ENCODE measurements at regions of chr17 and their contacts with region 1.

Region 1: GRCh38 chr17:39927101-39927928 is at the starts of genes LRRC3C and ORMDL3:
- DNase-seq: peak; percentile 86 to 95 (median 92)
- ATAC-seq: peak; percentile 92
- H3K4me3 ChIP-seq: peak within 1 kb of the TSS; percentile 82
- H3K4me3 Mint-ChIP-seq: peak within 1 kb of the TSS; percentile 90 to 98 (median 92)
- H3K27ac ChIP-seq: peak within 1 kb of the TSS; percentile 87
- H3K27ac Mint-ChIP-seq: peak within 1 kb of the TSS; percentile 85 to 97 (median 93)
- H3K4me1 ChIP-seq: peaks cover 49 to 50% of the 10 kb centered on the region in 2 donors
- H3K4me1 Mint-ChIP-seq: peaks cover 20 to 59% (median 46%) of the 10 kb centered on the region in 7 donors
- H3K27me3 ChIP-seq: no peaks in the 10 kb centered on the region
- H3K27me3 Mint-ChIP-seq: no peaks in the 10 kb centered on the region
- total RNA-seq, gene LRRC3C: 0.27 TPM in 1 of 5 experiments, not detected in the others
- total RNA-seq, gene ORMDL3: 77.6 to 205 (median 110) TPM

Region 2: DNA sequence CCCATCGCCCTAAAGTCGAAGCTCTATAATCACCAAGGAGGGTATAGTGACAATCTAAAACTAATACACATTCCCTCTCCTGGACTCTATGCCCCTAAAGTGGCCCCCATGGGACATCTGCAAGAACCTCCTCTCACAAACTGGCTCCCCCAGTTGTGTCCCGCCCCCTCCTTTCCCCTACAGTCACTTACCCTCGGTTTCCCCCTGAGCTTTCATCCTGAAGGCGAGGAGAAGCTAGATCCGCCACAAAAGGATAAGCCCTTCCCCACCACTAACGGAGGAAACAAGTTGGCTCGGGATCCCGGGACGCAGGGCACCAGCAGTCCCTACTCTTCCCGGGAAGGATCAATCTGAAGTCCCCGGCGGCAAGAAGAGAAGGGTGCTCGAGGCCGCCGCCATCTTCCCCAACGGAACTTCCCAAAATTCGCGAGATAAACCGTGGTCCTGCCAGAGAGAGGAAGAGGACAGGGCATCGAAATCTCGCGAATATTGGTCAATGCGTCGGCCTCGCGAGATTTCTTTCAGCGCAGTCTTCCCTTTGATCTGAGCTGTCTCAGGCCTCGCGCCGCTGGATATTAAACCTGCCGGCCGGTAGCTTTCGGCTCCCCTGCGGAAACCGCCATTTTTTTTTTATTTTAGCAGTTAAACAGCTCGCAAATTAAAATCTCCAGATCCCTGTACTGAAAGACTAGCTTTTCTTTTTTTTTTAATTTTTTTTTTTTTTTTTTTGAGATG is 476.3 kb before region 1 on chr17 and contains the start of gene MED1:
- CTCF ChIA-PET with region 1: no interaction called
- POLR2A ChIA-PET with region 1: no interaction called
- intact Hi-C with region 1: no loop called
- DNase-seq: peak; percentile 77 to 94 (median 89)
- ATAC-seq: peak; percentile 95
- H3K4me3 ChIP-seq: peak within 1 kb of the TSS; percentile 98
- H3K4me3 Mint-ChIP-seq: peak within 1 kb of the TSS; percentile 92 to 98 (median 96)
- H3K27ac ChIP-seq: peak within 1 kb of the TSS; percentile 85
- H3K27ac Mint-ChIP-seq: peak within 1 kb of the TSS; percentile 96 to 100 (median 99)
- H3K4me1 ChIP-seq: peaks cover 8 to 12% of the 10 kb centered on the region in 2 donors
- H3K4me1 Mint-ChIP-seq: peaks cover 7 to 38% (median 29%) of the 10 kb centered on the region in 7 donors
- H3K27me3 ChIP-seq: no peaks in the 10 kb centered on the region
- H3K27me3 Mint-ChIP-seq: no peaks in the 10 kb centered on the region
- total RNA-seq, gene MED1: 37.3 to 61.5 (median 56.0) TPM

Region 3: DNA sequence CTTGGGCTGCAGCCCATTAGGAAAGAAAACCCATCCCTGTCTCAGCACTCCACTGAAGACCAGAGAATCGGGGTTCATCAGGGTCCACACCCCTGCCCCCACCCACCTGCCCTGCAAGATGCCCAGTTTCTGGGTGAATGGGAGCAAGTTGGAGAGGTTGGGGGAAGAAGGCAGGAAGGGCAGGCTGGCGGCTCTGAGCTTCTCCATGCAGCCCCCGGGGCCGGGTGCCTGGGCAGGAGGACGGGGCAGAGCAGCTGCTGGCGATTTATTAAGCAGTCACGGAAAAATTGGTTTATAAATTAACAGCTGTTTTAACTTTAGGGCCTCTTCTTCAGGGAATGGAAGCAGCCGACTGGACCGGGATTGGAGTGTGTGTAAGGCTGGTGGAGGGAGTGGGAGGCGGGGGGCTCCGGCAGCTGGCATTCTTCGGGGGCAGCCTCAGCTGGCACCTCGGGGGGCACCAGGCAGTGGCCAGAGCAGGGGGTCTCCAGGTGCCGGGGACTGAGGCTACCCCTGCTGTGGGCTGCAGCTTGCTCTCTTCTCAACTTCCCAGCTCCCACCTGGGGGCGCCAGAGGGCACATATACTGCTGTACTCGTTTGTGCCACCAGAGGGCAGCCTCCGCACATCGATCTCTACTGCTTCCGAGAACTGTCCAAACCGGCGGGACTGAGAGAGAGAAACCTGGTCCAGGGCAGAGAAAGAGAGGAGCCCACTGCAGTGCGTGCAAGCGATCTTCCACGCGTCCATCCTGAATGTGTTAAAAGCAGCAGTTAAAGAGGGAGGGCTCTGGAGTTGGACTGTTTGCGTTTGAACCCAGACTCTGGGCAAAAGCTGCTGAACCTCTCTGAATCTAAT is 305.6 kb before region 1 on chr17:
- CTCF ChIA-PET with region 1: interaction called, 4 read pairs
- POLR2A ChIA-PET with region 1: interaction called, 3 read pairs
- intact Hi-C with region 1: loop called in 1 of 2 experiments (anchors 2 kb)
- DNase-seq: peak; percentile 74 to 95 (median 86)
- ATAC-seq: peak; percentile 94
- H3K4me3 ChIP-seq: peak overlapping the region; percentile 41
- H3K4me3 Mint-ChIP-seq: peak overlapping the region in 8 of 10 donors; percentile 34 to 82 (median 58)
- H3K27ac ChIP-seq: no peak overlapping the region
- H3K27ac Mint-ChIP-seq: peak overlapping the region in 4 of 9 donors; percentile 10 to 74 (median 66)
- H3K4me1 ChIP-seq: peaks cover 12 to 26% of the 10 kb centered on the region in 2 donors
- H3K4me1 Mint-ChIP-seq: peaks cover 15 to 38% (median 24%) of the 10 kb centered on the region in 7 donors
- H3K27me3 ChIP-seq: peaks cover 3 to 7% of the 10 kb centered on the region in 2 donors
- H3K27me3 Mint-ChIP-seq: peaks cover 5 to 69% (median 18%) of the 10 kb centered on the region in 5 donors

Region 4: GRCh38 chr17:39676198-39676819 is 251.0 kb before region 1 on chr17:
- CTCF ChIA-PET with region 1: no interaction called
- POLR2A ChIA-PET with region 1: no interaction called
- intact Hi-C with region 1: no loop called
- DNase-seq: peak in 7 of 9 donors; percentile 49 to 73 (median 58)
- ATAC-seq: peak; percentile 86
- H3K4me3 ChIP-seq: no peak overlapping the region
- H3K4me3 Mint-ChIP-seq: peak overlapping the region in 8 of 10 donors; percentile 6 to 70 (median 50)
- H3K27ac ChIP-seq: peak overlapping the region; percentile 17
- H3K27ac Mint-ChIP-seq: peak overlapping the region; percentile 55 to 97 (median 89)
- H3K4me1 ChIP-seq: peaks cover 45 to 63% of the 10 kb centered on the region in 2 donors
- H3K4me1 Mint-ChIP-seq: peaks cover 43 to 68% (median 59%) of the 10 kb centered on the region in 7 donors
- H3K27me3 ChIP-seq: no peaks in the 10 kb centered on the region
- H3K27me3 Mint-ChIP-seq: peaks cover 0 to 3% (median 0%) of the 10 kb centered on the region in 5 donors

Region 5: DNA sequence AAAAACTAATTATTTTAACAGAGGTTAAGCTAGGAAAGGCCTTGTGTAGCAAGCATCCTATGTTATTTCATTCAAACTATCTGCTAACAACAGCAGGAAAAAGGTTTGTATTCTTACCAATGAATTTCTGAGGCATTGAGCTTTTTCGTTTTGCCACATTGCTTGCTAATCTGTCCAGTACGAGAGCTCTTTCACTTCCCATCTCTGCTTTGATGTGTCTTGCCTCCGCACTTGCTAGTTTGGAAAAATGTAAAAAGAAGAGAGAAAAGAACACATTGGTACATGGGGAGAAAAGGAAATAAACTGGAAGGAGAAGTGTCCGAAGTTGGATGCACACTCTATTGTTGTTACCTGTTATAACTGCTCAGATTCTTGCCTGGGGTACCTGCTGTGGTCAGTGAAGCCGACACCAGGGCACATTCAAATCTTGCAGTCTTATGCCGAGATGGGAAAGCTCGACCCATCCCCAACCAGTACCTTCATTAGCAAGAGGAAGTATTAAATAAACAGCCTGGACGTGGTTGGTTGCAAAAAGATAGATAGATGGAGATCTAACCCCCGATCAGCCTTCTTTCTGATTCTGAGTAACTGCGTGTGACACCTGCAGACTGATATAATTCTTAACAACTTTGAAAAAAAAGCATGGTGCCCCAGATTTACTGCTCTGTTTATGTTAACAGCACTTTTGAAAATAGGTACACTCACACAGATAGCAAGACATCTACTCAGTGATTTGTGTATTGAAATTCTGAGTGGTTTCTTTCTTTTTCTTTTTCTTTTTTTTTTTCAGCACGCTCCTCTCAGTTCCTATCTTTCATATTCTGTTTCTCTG is 149.6 kb before region 1 on chr17:
- CTCF ChIA-PET with region 1: no interaction called
- POLR2A ChIA-PET with region 1: no interaction called
- intact Hi-C with region 1: loop called in 1 of 2 experiments (anchors 5 kb)
- DNase-seq: peak in 1 of 9 donors; percentile 40
- ATAC-seq: peak; percentile 72
- H3K4me3 ChIP-seq: peak overlapping the region; percentile 74
- H3K4me3 Mint-ChIP-seq: peak overlapping the region; percentile 79 to 95 (median 90)
- H3K27ac ChIP-seq: peak overlapping the region; percentile 77
- H3K27ac Mint-ChIP-seq: peak overlapping the region; percentile 68 to 98 (median 94)
- H3K4me1 ChIP-seq: peaks cover 61 to 75% of the 10 kb centered on the region in 2 donors
- H3K4me1 Mint-ChIP-seq: peaks cover 60 to 91% (median 86%) of the 10 kb centered on the region in 7 donors
- H3K27me3 ChIP-seq: no peaks in the 10 kb centered on the region
- H3K27me3 Mint-ChIP-seq: no peaks in the 10 kb centered on the region

Region 6: DNA sequence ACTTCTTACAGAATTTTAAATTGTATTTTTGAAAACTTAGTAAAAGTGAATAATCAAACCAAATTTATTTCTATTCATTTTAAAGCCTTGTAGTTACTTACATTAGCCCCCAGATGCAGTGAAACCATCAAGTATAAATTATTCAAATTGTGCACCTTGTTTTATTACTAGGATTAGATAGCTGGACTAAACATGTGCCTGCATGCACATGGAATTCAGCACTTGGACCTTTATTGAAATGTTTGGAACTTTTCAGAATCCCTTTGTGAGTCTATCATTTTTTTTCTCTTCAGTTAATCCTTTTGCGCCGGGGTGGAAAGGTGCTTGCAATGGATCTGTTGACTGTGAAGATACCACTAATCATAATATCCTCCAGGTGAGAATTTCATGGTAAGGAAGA is 54.6 kb before region 1 on chr17:
- CTCF ChIA-PET with region 1: interaction called, 4 read pairs
- POLR2A ChIA-PET with region 1: interaction called, 5 read pairs
- intact Hi-C with region 1: loop called in 1 of 2 experiments (anchors 1 kb)
- DNase-seq: peak in 1 of 9 donors; percentile 25
- ATAC-seq: peak; percentile 57
- H3K4me3 ChIP-seq: no peak overlapping the region
- H3K4me3 Mint-ChIP-seq: no peak overlapping the region
- H3K27ac ChIP-seq: no peak overlapping the region
- H3K27ac Mint-ChIP-seq: no peak overlapping the region
- H3K4me1 ChIP-seq: no peaks in the 10 kb centered on the region
- H3K4me1 Mint-ChIP-seq: peaks cover 2 to 13% (median 11%) of the 10 kb centered on the region in 7 donors
- H3K27me3 ChIP-seq: no peaks in the 10 kb centered on the region
- H3K27me3 Mint-ChIP-seq: peaks cover 0 to 22% (median 0%) of the 10 kb centered on the region in 5 donors

Region 7: GRCh38 chr17:39952680-39953470 is 25.6 kb after region 1 on chr17:
- CTCF ChIA-PET with region 1: interaction called, 3 read pairs
- POLR2A ChIA-PET with region 1: interaction called, 13 read pairs
- intact Hi-C with region 1: loop called (anchors 1 kb)
- DNase-seq: peak; percentile 81 to 98 (median 90)
- ATAC-seq: peak; percentile 94
- H3K4me3 ChIP-seq: peak overlapping the region; percentile 71
- H3K4me3 Mint-ChIP-seq: peak overlapping the region; percentile 68 to 93 (median 82)
- H3K27ac ChIP-seq: peak overlapping the region; percentile 74
- H3K27ac Mint-ChIP-seq: peak overlapping the region; percentile 28 to 87 (median 72)
- H3K4me1 ChIP-seq: peaks cover 5 to 18% of the 10 kb centered on the region in 2 donors
- H3K4me1 Mint-ChIP-seq: peaks cover 1 to 43% (median 27%) of the 10 kb centered on the region in 7 donors
- H3K27me3 ChIP-seq: no peaks in the 10 kb centered on the region
- H3K27me3 Mint-ChIP-seq: peaks cover 0 to 7% (median 0%) of the 10 kb centered on the region in 5 donors

Measured in naive thymus-derived CD4-positive, alpha-beta T cell (primary cell).